B cell (primary cell): ENCODE measurements at regions of chr5 and their contacts with region 1.

Region 1: GRCh38 chr5:38441453-38442246 is 114.8 kb downstream of the LIFR start:
- DNase-seq: peak; percentile 78
- ATAC-seq: peak; percentile 91
- H3K4me3 ChIP-seq: no peak overlapping the region
- H3K4me3 Mint-ChIP-seq: no peak overlapping the region
- H3K27ac ChIP-seq: no peak overlapping the region
- H3K27ac Mint-ChIP-seq: peak overlapping the region; percentile 53
- H3K4me1 ChIP-seq: no peaks in the 10 kb centered on the region
- H3K4me1 Mint-ChIP-seq: no peaks in the 10 kb centered on the region
- H3K27me3 ChIP-seq: peaks cover 0 to 52% (median 21%) of the 10 kb centered on the region in 4 experiments
- H3K27me3 Mint-ChIP-seq: peaks cover 51% of the 10 kb centered on the region
- CTCF ChIP-seq: peak; percentile 94

Region 2: DNA sequence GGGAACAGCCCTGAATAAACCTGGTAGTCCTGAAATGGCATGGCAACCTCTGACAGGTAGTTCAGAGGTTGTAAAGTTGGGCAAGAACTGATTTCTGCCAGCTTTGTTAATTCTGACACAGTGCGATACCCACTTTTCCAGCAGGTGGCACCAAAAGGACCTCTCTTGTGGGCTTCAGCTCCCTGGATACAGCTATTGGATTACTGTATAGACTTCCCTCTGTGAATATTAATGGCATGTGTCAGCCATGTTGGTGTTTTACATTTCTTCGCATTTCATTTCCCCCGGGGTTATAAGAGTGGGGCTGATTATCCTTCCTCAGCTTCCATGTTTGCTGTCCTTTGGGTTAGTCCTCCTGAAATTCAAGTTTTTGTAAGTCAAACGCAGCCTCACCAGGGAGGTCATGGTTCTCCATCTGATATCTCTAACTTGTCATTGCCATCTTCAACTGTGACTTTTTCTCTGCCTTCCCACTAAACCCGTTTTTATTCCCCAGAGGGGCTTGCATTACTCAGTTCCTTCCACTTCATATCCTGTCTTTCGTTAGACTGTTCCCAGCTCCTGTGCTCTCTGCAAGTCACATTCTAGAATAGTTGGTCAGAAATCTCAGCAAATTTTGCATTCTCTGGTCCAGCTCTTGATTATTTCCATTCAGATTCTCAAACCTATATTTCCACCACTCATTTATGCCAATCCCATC is 20.8 kb before region 1 on chr5:
- CTCF ChIA-PET with region 1: interaction called, 11 read pairs
- POLR2A ChIA-PET with region 1: no interaction called
- intact Hi-C with region 1: no loop called
- DNase-seq: peak; percentile 11
- ATAC-seq: no peak
- H3K4me3 ChIP-seq: no peak overlapping the region
- H3K4me3 Mint-ChIP-seq: no peak overlapping the region
- H3K27ac ChIP-seq: no peak overlapping the region
- H3K27ac Mint-ChIP-seq: no peak overlapping the region
- H3K4me1 ChIP-seq: no peaks in the 10 kb centered on the region
- H3K4me1 Mint-ChIP-seq: no peaks in the 10 kb centered on the region
- H3K27me3 ChIP-seq: peaks cover 0 to 16% (median 0%) of the 10 kb centered on the region in 4 experiments
- H3K27me3 Mint-ChIP-seq: peaks cover 45% of the 10 kb centered on the region
- CTCF ChIP-seq: peak; percentile 49

Region 3: GRCh38 chr5:38551030-38552017 is 109.7 kb after region 1 on chr5:
- CTCF ChIA-PET with region 1: interaction called, 12 read pairs
- POLR2A ChIA-PET with region 1: no interaction called
- intact Hi-C with region 1: loop called (anchors 2 kb)
- DNase-seq: no peak
- ATAC-seq: no peak
- H3K4me3 ChIP-seq: no peak overlapping the region
- H3K4me3 Mint-ChIP-seq: no peak overlapping the region
- H3K27ac ChIP-seq: no peak overlapping the region
- H3K27ac Mint-ChIP-seq: no peak overlapping the region
- H3K4me1 ChIP-seq: peaks cover 0 to 7% of the 10 kb centered on the region in 2 donors
- H3K4me1 Mint-ChIP-seq: peaks cover 3% of the 10 kb centered on the region
- H3K27me3 ChIP-seq: peaks cover 0 to 27% (median 24%) of the 10 kb centered on the region in 4 experiments
- H3K27me3 Mint-ChIP-seq: peaks cover 58% of the 10 kb centered on the region
- CTCF ChIP-seq: no peak

Region 4: GRCh38 chr5:38809388-38810359 is 368.0 kb after region 1 on chr5:
- CTCF ChIA-PET with region 1: interaction called, 8 read pairs
- POLR2A ChIA-PET with region 1: no interaction called
- intact Hi-C with region 1: loop called (anchors 5 kb)
- DNase-seq: peak; percentile 11
- ATAC-seq: no peak
- H3K4me3 ChIP-seq: no peak overlapping the region
- H3K4me3 Mint-ChIP-seq: no peak overlapping the region
- H3K27ac ChIP-seq: no peak overlapping the region
- H3K27ac Mint-ChIP-seq: no peak overlapping the region
- H3K4me1 ChIP-seq: no peaks in the 10 kb centered on the region
- H3K4me1 Mint-ChIP-seq: no peaks in the 10 kb centered on the region
- H3K27me3 ChIP-seq: no peaks in the 10 kb centered on the region
- H3K27me3 Mint-ChIP-seq: peaks cover 31% of the 10 kb centered on the region
- CTCF ChIP-seq: peak; percentile 43

Region 5: GRCh38 chr5:39080597-39081204 is 639.1 kb after region 1 on chr5:
- CTCF ChIA-PET with region 1: interaction called, 54 read pairs
- POLR2A ChIA-PET with region 1: no interaction called
- intact Hi-C with region 1: no loop called
- DNase-seq: peak; percentile 55
- ATAC-seq: peak; percentile 37
- H3K4me3 ChIP-seq: no peak overlapping the region
- H3K4me3 Mint-ChIP-seq: no peak overlapping the region
- H3K27ac ChIP-seq: no peak overlapping the region
- H3K27ac Mint-ChIP-seq: no peak overlapping the region
- H3K4me1 ChIP-seq: peaks cover 10 to 16% of the 10 kb centered on the region in 2 donors
- H3K4me1 Mint-ChIP-seq: peaks cover 23% of the 10 kb centered on the region
- H3K27me3 ChIP-seq: no peaks in the 10 kb centered on the region
- H3K27me3 Mint-ChIP-seq: peaks cover 3% of the 10 kb centered on the region
- CTCF ChIP-seq: peak; percentile 76

Region 6: DNA sequence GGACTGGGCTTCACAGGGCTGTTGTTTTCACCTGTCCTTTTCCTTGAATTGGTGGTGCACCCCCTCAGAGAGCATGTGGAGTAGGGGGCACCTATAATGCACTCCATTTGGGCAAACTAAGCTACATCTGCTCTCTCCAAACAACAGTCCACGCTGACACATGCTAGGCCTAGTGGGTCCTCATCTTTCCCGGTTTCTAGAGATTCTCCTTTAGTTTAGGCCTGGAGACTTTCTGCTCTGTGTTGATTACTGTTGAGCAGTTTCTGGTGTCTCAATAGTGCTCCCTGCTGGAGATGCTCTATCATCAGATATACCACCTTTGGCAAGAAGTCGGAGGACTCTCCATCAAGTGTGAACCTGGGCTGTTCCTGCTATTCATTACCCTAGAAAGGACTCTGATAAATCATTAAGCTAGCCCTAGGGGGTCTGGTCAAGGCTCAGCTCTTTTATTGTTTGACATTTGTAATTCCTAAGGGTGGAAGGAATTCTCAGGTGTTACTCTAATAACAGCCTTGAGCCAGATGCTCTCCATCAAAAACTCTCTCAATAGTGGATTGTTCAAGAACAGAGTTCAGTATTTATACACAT is 841.7 kb after region 1 on chr5:
- CTCF ChIA-PET with region 1: interaction called, 24 read pairs
- POLR2A ChIA-PET with region 1: no interaction called
- intact Hi-C with region 1: no loop called
- DNase-seq: peak; percentile 77
- ATAC-seq: peak; percentile 64
- H3K4me3 ChIP-seq: no peak overlapping the region
- H3K4me3 Mint-ChIP-seq: no peak overlapping the region
- H3K27ac ChIP-seq: no peak overlapping the region
- H3K27ac Mint-ChIP-seq: no peak overlapping the region
- H3K4me1 ChIP-seq: no peaks in the 10 kb centered on the region
- H3K4me1 Mint-ChIP-seq: no peaks in the 10 kb centered on the region
- H3K27me3 ChIP-seq: peaks cover 0 to 12% (median 0%) of the 10 kb centered on the region in 4 experiments
- H3K27me3 Mint-ChIP-seq: peaks cover 28% of the 10 kb centered on the region
- CTCF ChIP-seq: peak; percentile 80

Region 7: GRCh38 chr5:39570403-39571027 is 1128.9 kb after region 1 on chr5:
- CTCF ChIA-PET with region 1: interaction called, 3 read pairs
- POLR2A ChIA-PET with region 1: no interaction called
- intact Hi-C with region 1: loop called (anchors 10 kb)
- DNase-seq: peak; percentile 31
- ATAC-seq: no peak
- H3K4me3 ChIP-seq: no peak overlapping the region
- H3K4me3 Mint-ChIP-seq: no peak overlapping the region
- H3K27ac ChIP-seq: no peak overlapping the region
- H3K27ac Mint-ChIP-seq: no peak overlapping the region
- H3K4me1 ChIP-seq: no peaks in the 10 kb centered on the region
- H3K4me1 Mint-ChIP-seq: no peaks in the 10 kb centered on the region
- H3K27me3 ChIP-seq: peaks cover 0 to 5% (median 2%) of the 10 kb centered on the region in 4 experiments
- H3K27me3 Mint-ChIP-seq: peaks cover 7% of the 10 kb centered on the region
- CTCF ChIP-seq: peak; percentile 74